CD8-positive, alpha-beta T cell (primary cell): ENCODE measurements at regions of chr11 and their contacts with region 1.

Region 1: GRCh38 chr11:67317205-67317887 is 14.0 kb downstream of the SSH3 start:
- DNase-seq: peak; percentile 96 to 99 (median 98)
- ATAC-seq: peak; percentile 76
- H3K4me3 ChIP-seq: peak overlapping the region; percentile 68 to 82
- H3K4me3 Mint-ChIP-seq: peak overlapping the region; percentile 97
- H3K27ac ChIP-seq: peak overlapping the region; percentile 63 to 73
- H3K27ac Mint-ChIP-seq: peak overlapping the region; percentile 94
- H3K4me1 ChIP-seq: peaks cover 23% of the 10 kb centered on the region
- H3K4me1 Mint-ChIP-seq: peaks cover 32% of the 10 kb centered on the region
- H3K27me3 ChIP-seq: no peaks in the 10 kb centered on the region
- H3K27me3 Mint-ChIP-seq: no peaks in the 10 kb centered on the region
- CTCF ChIP-seq: peak; percentile 70

Region 2: DNA sequence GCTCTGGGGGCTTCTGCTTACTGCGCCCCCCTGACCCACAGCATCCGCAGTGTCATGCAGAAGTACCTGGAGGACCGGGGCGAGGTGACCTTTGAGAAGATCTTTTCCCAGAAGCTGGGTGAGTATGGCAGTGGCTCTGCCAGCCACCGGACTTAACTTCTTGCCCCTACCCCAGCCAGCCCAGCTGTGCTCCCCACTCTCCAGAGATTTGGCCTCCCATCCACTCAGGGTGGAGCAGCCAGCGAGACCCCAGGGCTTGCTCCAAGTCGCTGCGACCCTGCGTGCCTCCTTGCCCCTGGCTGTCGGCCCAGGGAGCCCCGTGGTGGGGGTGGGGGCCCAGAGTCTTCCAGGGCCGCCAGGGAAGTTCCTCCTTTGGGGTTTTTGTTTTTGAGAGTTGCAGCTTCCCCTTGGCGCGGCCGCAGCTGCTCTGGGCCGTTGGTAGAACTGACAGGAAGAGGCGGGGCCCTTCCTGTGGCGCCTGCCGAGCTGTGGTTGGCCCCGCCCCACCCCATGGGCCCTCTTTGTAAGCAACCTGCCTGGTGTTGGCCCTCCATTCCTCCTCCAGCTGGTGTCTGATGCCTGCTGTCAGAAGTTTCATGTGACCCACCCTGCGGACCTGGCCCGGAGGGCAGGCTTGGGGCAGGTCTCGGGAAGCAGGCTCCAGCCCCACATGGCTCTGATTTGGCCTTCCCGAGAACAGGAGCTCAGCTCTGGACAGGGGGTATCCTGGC is 40.0 kb before region 1 on chr11:
- CTCF ChIA-PET with region 1: interaction called, 32 read pairs
- POLR2A ChIA-PET with region 1: interaction called, 20 read pairs
- intact Hi-C with region 1: loop called (anchors 1 kb)
- DNase-seq: peak; percentile 82 to 98 (median 93)
- ATAC-seq: peak; percentile 92
- H3K4me3 ChIP-seq: peak overlapping the region; percentile 46 to 79
- H3K4me3 Mint-ChIP-seq: peak overlapping the region; percentile 79
- H3K27ac ChIP-seq: peak overlapping the region; percentile 74 to 76
- H3K27ac Mint-ChIP-seq: peak overlapping the region; percentile 95
- H3K4me1 ChIP-seq: peaks cover 100% of the 10 kb centered on the region
- H3K4me1 Mint-ChIP-seq: peaks cover 68% of the 10 kb centered on the region
- H3K27me3 ChIP-seq: no peaks in the 10 kb centered on the region
- H3K27me3 Mint-ChIP-seq: no peaks in the 10 kb centered on the region
- CTCF ChIP-seq: no peak

Region 3: GRCh38 chr11:67288452-67289225 is 28.7 kb before region 1 on chr11:
- CTCF ChIA-PET with region 1: interaction called, 16 read pairs
- POLR2A ChIA-PET with region 1: interaction called, 33 read pairs
- intact Hi-C with region 1: loop called (anchors 1 kb)
- DNase-seq: peak; percentile 78 to 97 (median 92)
- ATAC-seq: peak; percentile 67
- H3K4me3 ChIP-seq: peak overlapping the region; percentile 90 to 92
- H3K4me3 Mint-ChIP-seq: peak overlapping the region; percentile 80
- H3K27ac ChIP-seq: peak overlapping the region; percentile 79 to 98
- H3K27ac Mint-ChIP-seq: peak overlapping the region; percentile 98
- H3K4me1 ChIP-seq: peaks cover 64% of the 10 kb centered on the region
- H3K4me1 Mint-ChIP-seq: peaks cover 59% of the 10 kb centered on the region
- H3K27me3 ChIP-seq: no peaks in the 10 kb centered on the region
- H3K27me3 Mint-ChIP-seq: no peaks in the 10 kb centered on the region
- CTCF ChIP-seq: peak; percentile 58

Region 4: DNA sequence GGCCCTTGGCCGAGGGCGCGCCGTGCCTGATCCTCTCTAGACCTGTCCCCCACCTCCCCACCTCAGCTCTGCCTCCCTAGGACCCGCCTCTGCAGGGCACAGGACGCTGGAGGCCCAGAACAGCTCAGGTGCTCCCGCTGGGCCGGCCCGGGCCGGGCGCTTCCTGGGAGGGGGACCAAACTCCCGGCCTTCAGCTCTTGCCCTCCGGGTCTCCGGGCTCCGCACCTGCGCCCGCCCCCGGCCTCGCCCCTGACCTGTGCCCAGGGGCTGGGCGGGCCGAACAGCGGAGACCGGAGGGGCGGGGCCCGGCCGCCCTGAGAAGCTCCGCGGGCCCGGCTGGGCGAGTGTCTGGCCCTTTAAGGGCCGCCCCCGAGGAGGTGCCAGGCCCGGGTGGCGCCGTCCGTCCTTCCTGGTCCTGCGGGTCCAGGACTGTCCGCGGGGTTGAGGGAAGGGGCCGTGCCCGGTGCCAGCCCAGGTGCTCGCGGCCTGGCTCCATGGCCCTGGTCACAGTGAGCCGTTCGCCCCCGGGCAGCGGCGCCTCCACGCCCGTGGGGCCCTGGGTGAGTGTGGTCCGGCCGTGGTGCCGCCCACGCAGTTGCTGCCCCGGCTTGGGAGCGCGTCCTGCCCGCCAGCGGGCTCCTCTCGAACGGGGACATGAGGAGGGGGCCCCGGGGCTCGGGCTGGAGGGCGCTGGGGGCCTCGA is 14.1 kb before region 1 on chr11 and contains the start of gene SSH3:
- CTCF ChIA-PET with region 1: interaction called, 15 read pairs
- POLR2A ChIA-PET with region 1: interaction called, 10 read pairs
- intact Hi-C with region 1: loop called in 1 of 2 experiments (anchors 1 kb)
- DNase-seq: peak in 8 of 9 experiments; percentile 19 to 72 (median 48)
- ATAC-seq: peak; percentile 72
- H3K4me3 ChIP-seq: peak within 1 kb of the TSS; percentile 61 to 63
- H3K4me3 Mint-ChIP-seq: peak within 1 kb of the TSS; percentile 72
- H3K27ac ChIP-seq: peak within 1 kb of the TSS; percentile 32 to 37
- H3K27ac Mint-ChIP-seq: peak within 1 kb of the TSS; percentile 72
- H3K4me1 ChIP-seq: peaks cover 20% of the 10 kb centered on the region
- H3K4me1 Mint-ChIP-seq: peaks cover 16% of the 10 kb centered on the region
- H3K27me3 ChIP-seq: no peaks in the 10 kb centered on the region
- H3K27me3 Mint-ChIP-seq: no peaks in the 10 kb centered on the region
- CTCF ChIP-seq: no peak
- total RNA-seq, gene SSH3: 5.9 to 9.9 TPM

Region 5: GRCh38 chr11:67382276-67383136 is 65.2 kb after region 1 on chr11:
- CTCF ChIA-PET with region 1: interaction called, 43 read pairs
- POLR2A ChIA-PET with region 1: interaction called, 3 read pairs
- intact Hi-C with region 1: loop called (anchors 1 kb)
- DNase-seq: peak; percentile 72 to 90 (median 86)
- ATAC-seq: peak; percentile 98
- H3K4me3 ChIP-seq: no peak overlapping the region
- H3K4me3 Mint-ChIP-seq: no peak overlapping the region
- H3K27ac ChIP-seq: no peak overlapping the region
- H3K27ac Mint-ChIP-seq: no peak overlapping the region
- H3K4me1 ChIP-seq: peaks cover 5% of the 10 kb centered on the region
- H3K4me1 Mint-ChIP-seq: peaks cover 5% of the 10 kb centered on the region
- H3K27me3 ChIP-seq: no peaks in the 10 kb centered on the region
- H3K27me3 Mint-ChIP-seq: no peaks in the 10 kb centered on the region
- CTCF ChIP-seq: peak; percentile 90

Region 6: DNA sequence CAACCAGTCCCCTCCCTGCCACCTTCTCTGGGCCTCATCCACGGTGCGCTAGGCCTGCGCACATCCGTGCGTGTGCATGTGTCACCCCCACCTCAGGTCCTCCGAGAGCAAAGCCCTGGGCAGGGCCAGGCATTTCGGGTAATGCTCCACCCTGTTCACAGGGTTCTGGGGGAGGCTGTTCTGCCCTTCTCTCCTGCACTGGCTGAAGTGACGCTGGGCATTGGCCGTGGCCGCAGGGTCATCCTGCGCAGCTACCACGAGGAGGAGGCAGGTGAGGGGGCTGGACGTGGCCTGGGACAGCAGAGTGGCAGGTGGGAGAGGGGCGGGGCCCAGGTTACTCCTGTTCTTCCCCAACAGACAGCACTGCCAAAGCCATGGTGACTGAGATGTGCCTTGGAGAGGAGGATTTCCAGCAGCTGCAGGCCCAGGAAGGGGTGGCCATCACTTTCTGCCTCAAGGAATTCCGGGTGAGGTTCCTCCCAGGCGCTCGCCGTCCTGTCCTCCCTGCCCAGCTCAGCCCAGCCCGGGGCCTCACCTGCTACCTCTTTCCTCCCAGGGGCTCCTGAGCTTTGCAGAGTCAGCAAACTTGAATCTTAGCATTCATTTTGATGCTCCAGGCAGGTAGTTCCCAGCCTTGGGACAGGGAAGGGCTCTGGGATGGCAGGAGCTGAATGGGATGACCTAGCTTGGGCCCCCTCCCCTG is 78.4 kb after region 1 on chr11:
- CTCF ChIA-PET with region 1: no interaction called
- POLR2A ChIA-PET with region 1: no interaction called
- intact Hi-C with region 1: no loop called
- DNase-seq: no peak
- ATAC-seq: no peak
- H3K4me3 ChIP-seq: no peak overlapping the region
- H3K4me3 Mint-ChIP-seq: no peak overlapping the region
- H3K27ac ChIP-seq: no peak overlapping the region
- H3K27ac Mint-ChIP-seq: no peak overlapping the region
- H3K4me1 ChIP-seq: peaks cover 67% of the 10 kb centered on the region
- H3K4me1 Mint-ChIP-seq: peaks cover 54% of the 10 kb centered on the region
- H3K27me3 ChIP-seq: no peaks in the 10 kb centered on the region
- H3K27me3 Mint-ChIP-seq: no peaks in the 10 kb centered on the region
- CTCF ChIP-seq: no peak

Region 7: GRCh38 chr11:67507864-67508485 is 190.6 kb after region 1 on chr11 and contains the start of gene CDK2AP2:
- CTCF ChIA-PET with region 1: no interaction called
- POLR2A ChIA-PET with region 1: no interaction called
- intact Hi-C with region 1: no loop called
- DNase-seq: peak; percentile 93 to 99 (median 97)
- ATAC-seq: peak; percentile 69
- H3K4me3 ChIP-seq: peak within 1 kb of the TSS; percentile 66 to 97
- H3K4me3 Mint-ChIP-seq: peak within 1 kb of the TSS; percentile 90
- H3K27ac ChIP-seq: peak within 1 kb of the TSS; percentile 97
- H3K27ac Mint-ChIP-seq: peak within 1 kb of the TSS; percentile 97
- H3K4me1 ChIP-seq: peaks cover 42% of the 10 kb centered on the region
- H3K4me1 Mint-ChIP-seq: peaks cover 38% of the 10 kb centered on the region
- H3K27me3 ChIP-seq: no peaks in the 10 kb centered on the region
- H3K27me3 Mint-ChIP-seq: peaks cover 6% of the 10 kb centered on the region
- CTCF ChIP-seq: no peak
- total RNA-seq, gene CDK2AP2: 19.4 to 24.4 TPM